CD4-positive, alpha-beta T cell (primary cell): ENCODE measurements at regions of chr20 and their contacts with region 1.

Region 1: GRCh38 chr20:11204926-11205768 is 531.3 kb upstream of the JAG1 start:
- DNase-seq: peak in 4 of 14 experiments; percentile 9 to 41 (median 28)
- ATAC-seq: no peak
- H3K4me3 ChIP-seq: no peak overlapping the region
- H3K4me3 Mint-ChIP-seq: no peak overlapping the region
- H3K27ac ChIP-seq: no peak overlapping the region
- H3K27ac Mint-ChIP-seq: no peak overlapping the region
- H3K4me1 ChIP-seq: no peaks in the 10 kb centered on the region
- H3K4me1 Mint-ChIP-seq: peaks cover 4% of the 10 kb centered on the region
- H3K27me3 ChIP-seq: no peaks in the 10 kb centered on the region
- H3K27me3 Mint-ChIP-seq: no peaks in the 10 kb centered on the region
- CTCF ChIP-seq: no peak

Region 2: DNA sequence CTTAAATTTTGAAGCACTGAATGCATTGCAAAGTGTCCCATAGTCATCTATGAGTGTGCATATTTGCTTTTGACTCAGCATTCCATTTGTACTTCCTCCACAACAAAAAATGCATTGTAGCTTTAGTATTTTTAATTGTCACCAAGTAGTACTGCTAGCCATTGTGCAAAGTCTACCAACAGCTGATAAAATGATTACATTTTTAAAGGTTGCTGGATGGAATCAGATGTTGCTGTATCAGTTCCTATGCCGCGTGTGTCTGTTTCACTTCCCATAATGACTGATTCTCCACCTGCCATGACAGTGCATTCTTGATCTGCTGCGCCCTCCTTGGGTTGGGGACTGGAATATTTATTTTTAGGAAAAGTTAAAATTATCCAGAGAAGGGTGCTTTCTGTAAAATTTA is 728.8 kb before region 1 on chr20:
- CTCF ChIA-PET with region 1: no interaction called
- POLR2A ChIA-PET with region 1: no interaction called
- intact Hi-C with region 1: loop called in 1 of 2 experiments (anchors 10 kb)
- DNase-seq: peak in 3 of 14 experiments; percentile 22 to 51 (median 48)
- ATAC-seq: no peak
- H3K4me3 ChIP-seq: no peak overlapping the region
- H3K4me3 Mint-ChIP-seq: no peak overlapping the region
- H3K27ac ChIP-seq: no peak overlapping the region
- H3K27ac Mint-ChIP-seq: no peak overlapping the region
- H3K4me1 ChIP-seq: peaks cover 12% of the 10 kb centered on the region
- H3K4me1 Mint-ChIP-seq: peaks cover 20% of the 10 kb centered on the region
- H3K27me3 ChIP-seq: no peaks in the 10 kb centered on the region
- H3K27me3 Mint-ChIP-seq: no peaks in the 10 kb centered on the region
- CTCF ChIP-seq: no peak

Region 3: GRCh38 chr20:11229772-11230171 is 24.6 kb after region 1 on chr20:
- CTCF ChIA-PET with region 1: no interaction called
- POLR2A ChIA-PET with region 1: no interaction called
- intact Hi-C with region 1: no loop called
- DNase-seq: no peak
- ATAC-seq: no peak
- H3K4me3 ChIP-seq: no peak overlapping the region
- H3K4me3 Mint-ChIP-seq: no peak overlapping the region
- H3K27ac ChIP-seq: no peak overlapping the region
- H3K27ac Mint-ChIP-seq: no peak overlapping the region
- H3K4me1 ChIP-seq: no peaks in the 10 kb centered on the region
- H3K4me1 Mint-ChIP-seq: no peaks in the 10 kb centered on the region
- H3K27me3 ChIP-seq: peaks cover 0 to 2% of the 10 kb centered on the region in 2 experiments
- H3K27me3 Mint-ChIP-seq: no peaks in the 10 kb centered on the region
- CTCF ChIP-seq: no peak